B cell (primary cell): ENCODE measurements at regions of chr16 and their contacts with region 1.

Region 1: GRCh38 chr16:30922960-30923535 is 324 bp upstream of the FBXL19 start:
- DNase-seq: peak; percentile 98
- ATAC-seq: peak; percentile 69
- H3K4me3 ChIP-seq: peak overlapping the region; percentile 80 to 100 (median 98)
- H3K4me3 Mint-ChIP-seq: peak overlapping the region; percentile 100
- H3K27ac ChIP-seq: peak overlapping the region; percentile 97 to 99
- H3K27ac Mint-ChIP-seq: peak overlapping the region; percentile 100
- H3K4me1 ChIP-seq: peaks cover 0 to 21% of the 10 kb centered on the region in 2 donors
- H3K4me1 Mint-ChIP-seq: peaks cover 19% of the 10 kb centered on the region
- H3K27me3 ChIP-seq: no peaks in the 10 kb centered on the region
- H3K27me3 Mint-ChIP-seq: no peaks in the 10 kb centered on the region
- CTCF ChIP-seq: no peak

Region 2: GRCh38 chr16:28924732-28925385 is 1998.2 kb before region 1 on chr16 and contains the start of gene RABEP2:
- CTCF ChIA-PET with region 1: no interaction called
- POLR2A ChIA-PET with region 1: no interaction called
- intact Hi-C with region 1: loop called (anchors 2 kb)
- DNase-seq: peak; percentile 97
- ATAC-seq: peak; percentile 60
- H3K4me3 ChIP-seq: peak within 1 kb of the TSS; percentile 58 to 97 (median 92)
- H3K4me3 Mint-ChIP-seq: peak within 1 kb of the TSS; percentile 95
- H3K27ac ChIP-seq: peak within 1 kb of the TSS; percentile 87 to 91
- H3K27ac Mint-ChIP-seq: peak within 1 kb of the TSS; percentile 98
- H3K4me1 ChIP-seq: peaks cover 30 to 61% of the 10 kb centered on the region in 2 donors
- H3K4me1 Mint-ChIP-seq: peaks cover 51% of the 10 kb centered on the region
- H3K27me3 ChIP-seq: no peaks in the 10 kb centered on the region
- H3K27me3 Mint-ChIP-seq: no peaks in the 10 kb centered on the region
- CTCF ChIP-seq: no peak
- total RNA-seq, gene RABEP2: 132 and 136 TPM in 2 replicates

Region 3: DNA sequence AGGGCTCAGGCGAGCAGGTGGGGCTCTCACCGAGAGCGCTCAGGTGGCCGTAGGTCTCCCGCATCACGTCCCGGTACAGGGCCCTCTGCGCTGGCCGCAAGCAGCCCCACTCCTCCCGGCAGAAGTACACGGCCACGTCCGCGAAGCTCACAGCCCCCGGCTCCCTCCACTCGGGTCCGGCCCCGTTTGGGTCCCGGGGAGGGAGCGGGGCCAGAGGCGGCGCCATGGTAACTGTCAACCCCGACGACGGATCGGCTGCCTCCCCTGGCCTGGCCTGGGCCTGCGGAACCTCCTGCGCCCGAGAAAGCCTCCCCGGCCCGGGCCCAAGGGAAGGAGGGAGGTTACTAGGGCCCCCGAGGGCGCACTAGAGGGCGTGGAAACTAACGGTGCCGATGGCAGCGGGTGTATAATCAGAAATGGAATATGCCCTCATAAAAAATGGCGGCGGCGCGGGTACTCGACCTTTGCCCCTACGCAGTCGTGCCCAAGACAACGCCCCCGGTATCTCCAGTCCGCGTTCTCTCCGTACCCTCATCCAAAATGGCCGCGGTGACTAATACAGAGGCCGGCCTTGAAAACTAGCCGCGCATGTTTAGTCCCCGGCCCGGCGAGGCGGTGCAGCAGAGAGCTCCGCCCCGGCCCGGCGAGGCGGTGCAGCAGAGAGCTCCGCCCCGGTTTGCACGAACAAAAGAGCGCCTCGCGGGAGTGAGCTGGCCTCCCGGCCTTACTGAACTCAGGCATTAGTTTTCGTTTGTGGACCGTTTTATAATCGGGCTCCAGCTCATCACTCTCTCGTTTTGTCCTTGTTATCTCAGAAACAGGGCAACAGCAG is 364.9 kb before region 1 on chr16 and contains the start of gene ZNF764:
- CTCF ChIA-PET with region 1: no interaction called
- POLR2A ChIA-PET with region 1: no interaction called
- intact Hi-C with region 1: loop called (anchors 2 kb)
- DNase-seq: peak; percentile 97
- ATAC-seq: peak; percentile 92
- H3K4me3 ChIP-seq: peak within 1 kb of the TSS in 4 of 5 experiments; percentile 80 to 91 (median 88)
- H3K4me3 Mint-ChIP-seq: peak within 1 kb of the TSS; percentile 86
- H3K27ac ChIP-seq: peak within 1 kb of the TSS; percentile 95 to 97
- H3K27ac Mint-ChIP-seq: peak within 1 kb of the TSS; percentile 91
- H3K4me1 ChIP-seq: peaks cover 14 to 35% of the 10 kb centered on the region in 2 donors
- H3K4me1 Mint-ChIP-seq: peaks cover 42% of the 10 kb centered on the region
- H3K27me3 ChIP-seq: no peaks in the 10 kb centered on the region
- H3K27me3 Mint-ChIP-seq: no peaks in the 10 kb centered on the region
- CTCF ChIP-seq: no peak
- total RNA-seq, gene ZNF764: 19.7 and 20.9 TPM in 2 replicates

Region 4: DNA sequence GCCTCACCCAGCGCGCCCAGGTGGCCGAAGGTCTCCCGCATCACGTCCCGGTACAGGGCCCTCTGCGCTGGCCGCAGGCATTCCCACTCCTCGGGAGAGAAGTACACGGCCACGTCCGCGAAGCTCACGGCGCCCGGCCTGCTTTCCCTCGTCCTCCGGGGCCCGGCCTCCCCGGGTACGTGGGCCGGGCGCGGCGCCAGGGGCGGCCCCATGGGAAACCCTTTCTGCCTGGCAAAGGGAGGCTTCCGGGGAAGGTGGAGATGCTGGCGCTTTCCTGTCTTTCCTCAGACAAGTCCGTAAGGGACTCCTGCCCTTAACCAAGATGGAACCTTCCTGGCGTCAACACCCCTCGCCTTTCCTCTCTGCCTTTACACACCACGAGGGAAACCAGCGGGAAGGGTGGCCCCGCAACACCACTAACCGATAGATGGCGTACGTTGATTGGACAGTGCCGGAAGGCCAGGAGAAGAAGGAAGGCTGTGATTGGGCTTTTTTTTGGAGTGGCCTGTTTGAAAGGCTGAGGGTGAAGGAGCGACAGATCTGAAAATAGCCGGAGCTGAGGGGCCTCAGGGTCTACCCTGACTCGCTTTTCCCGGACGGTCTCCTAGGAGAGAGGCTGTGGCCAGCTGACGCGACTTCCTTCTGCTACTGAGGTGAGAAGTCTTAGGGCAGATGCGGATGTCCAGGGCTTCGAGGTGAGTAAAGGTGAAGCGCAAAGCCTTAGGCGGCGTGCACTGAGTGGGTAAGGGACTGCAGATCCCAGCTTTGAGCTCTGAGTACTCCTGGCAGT is 337.5 kb before region 1 on chr16 and contains the start of gene ZNF785:
- CTCF ChIA-PET with region 1: no interaction called
- POLR2A ChIA-PET with region 1: no interaction called
- intact Hi-C with region 1: no loop called
- DNase-seq: peak; percentile 95
- ATAC-seq: peak; percentile 99
- H3K4me3 ChIP-seq: peak within 1 kb of the TSS; percentile 56 to 89 (median 75)
- H3K4me3 Mint-ChIP-seq: peak within 1 kb of the TSS; percentile 85
- H3K27ac ChIP-seq: peak within 1 kb of the TSS; percentile 29 to 82
- H3K27ac Mint-ChIP-seq: peak within 1 kb of the TSS; percentile 71
- H3K4me1 ChIP-seq: peaks cover 8 to 21% of the 10 kb centered on the region in 2 donors
- H3K4me1 Mint-ChIP-seq: peaks cover 22% of the 10 kb centered on the region
- H3K27me3 ChIP-seq: no peaks in the 10 kb centered on the region
- H3K27me3 Mint-ChIP-seq: no peaks in the 10 kb centered on the region
- CTCF ChIP-seq: no peak
- total RNA-seq, gene ZNF785: 39.7 and 44.6 TPM in 2 replicates

Region 5: DNA sequence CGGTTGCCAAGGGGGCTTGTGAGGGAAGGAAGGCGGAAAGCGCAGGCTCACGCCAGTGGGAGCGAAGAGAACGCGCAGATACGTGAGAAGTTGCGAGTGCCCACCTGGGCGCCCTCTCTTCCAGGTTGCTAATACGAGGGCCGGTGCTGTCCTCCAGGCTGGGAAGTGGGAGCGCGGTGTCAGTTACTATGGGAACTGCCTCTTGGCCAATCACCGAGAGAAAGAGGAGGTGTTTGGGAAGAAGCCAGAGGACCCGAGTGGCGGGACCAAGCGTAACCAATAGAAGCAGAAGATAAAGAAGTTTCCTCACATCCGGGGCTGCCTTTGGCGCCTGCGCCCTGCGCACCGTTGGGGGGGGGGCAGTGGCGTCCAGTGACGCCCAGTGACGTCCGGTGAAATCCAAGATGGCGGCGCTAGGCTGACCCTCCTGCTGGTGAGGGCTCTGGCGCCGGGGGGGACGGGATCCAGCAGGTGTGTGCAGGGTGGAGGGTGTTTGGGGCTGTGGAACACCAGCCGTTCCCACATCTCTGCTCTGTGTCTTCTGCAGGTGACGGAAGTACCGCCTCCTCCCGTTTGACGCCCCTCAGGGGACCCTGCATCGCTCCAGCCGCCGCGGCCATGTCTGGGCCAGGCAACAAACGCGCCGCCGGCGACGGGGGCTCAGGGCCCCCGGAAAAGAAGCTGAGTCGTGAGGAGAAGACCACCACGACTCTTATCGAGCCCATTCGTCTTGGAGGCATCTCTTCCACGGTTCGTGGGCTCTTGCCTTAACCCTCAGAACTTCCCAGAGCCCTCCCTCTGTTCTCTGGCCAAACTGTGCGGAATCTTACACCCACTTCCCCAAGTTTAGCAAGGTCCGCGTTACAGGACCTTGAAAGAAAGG is 160.9 kb before region 1 on chr16 and contains the starts of genes CFAP119 and RNF40:
- CTCF ChIA-PET with region 1: no interaction called
- POLR2A ChIA-PET with region 1: no interaction called
- intact Hi-C with region 1: loop called (anchors 1 kb)
- DNase-seq: peak; percentile 95
- ATAC-seq: peak; percentile 92
- H3K4me3 ChIP-seq: peak within 1 kb of the TSS; percentile 82 to 93 (median 90)
- H3K4me3 Mint-ChIP-seq: peak within 1 kb of the TSS; percentile 98
- H3K27ac ChIP-seq: peak within 1 kb of the TSS; percentile 57 to 91
- H3K27ac Mint-ChIP-seq: peak within 1 kb of the TSS; percentile 95
- H3K4me1 ChIP-seq: peaks cover 24 to 37% of the 10 kb centered on the region in 2 donors
- H3K4me1 Mint-ChIP-seq: peaks cover 36% of the 10 kb centered on the region
- H3K27me3 ChIP-seq: no peaks in the 10 kb centered on the region
- H3K27me3 Mint-ChIP-seq: no peaks in the 10 kb centered on the region
- CTCF ChIP-seq: no peak
- total RNA-seq, gene CFAP119: 9.3 and 11.7 TPM in 2 replicates
- total RNA-seq, gene RNF40: 120 and 121 TPM in 2 replicates

Region 6: DNA sequence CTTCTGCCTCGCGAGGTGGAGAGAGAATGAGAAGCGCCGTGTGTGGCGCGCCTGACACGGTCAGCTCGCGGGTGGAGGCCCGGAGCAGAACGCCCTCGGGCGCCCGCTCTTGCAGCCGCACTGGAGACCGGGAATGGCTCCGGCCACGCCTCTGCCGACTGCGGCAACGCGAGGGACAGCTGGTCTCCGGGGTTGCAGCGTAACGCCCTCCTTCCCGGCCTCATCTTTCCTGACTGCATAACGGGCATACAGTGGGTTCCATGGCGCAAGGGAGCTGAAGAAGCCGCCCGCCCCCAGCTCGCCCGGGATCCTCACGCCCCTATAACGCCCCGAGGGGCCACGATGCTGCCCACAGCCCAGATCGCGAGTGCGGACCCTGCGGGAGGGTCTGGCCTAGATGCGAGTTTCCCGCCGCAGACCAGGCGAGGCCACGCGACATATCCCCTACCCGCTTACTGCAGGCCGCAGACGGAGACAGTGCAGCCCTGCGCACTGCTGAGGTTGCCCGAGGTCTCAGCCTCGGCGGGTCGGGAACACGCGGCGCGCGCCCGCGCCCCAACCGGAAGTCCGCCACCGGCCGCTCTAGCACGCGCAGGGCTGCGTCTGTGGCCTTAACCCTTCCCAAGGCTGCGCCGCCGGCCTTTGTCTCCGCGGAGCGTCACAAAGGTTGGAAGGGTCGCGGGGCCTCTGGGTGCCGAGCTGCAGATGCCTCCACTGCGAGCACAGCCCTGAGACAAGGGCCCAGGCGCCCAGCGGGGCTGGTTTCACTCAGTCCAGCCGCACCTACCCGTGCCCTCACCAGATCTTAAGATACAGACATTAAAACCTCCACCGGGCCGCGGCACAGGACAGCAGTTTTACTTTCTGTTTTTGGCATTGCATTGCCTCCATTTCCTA is 48.0 kb before region 1 on chr16:
- CTCF ChIA-PET with region 1: no interaction called
- POLR2A ChIA-PET with region 1: interaction called, 3 read pairs
- intact Hi-C with region 1: loop called (anchors 1 kb)
- DNase-seq: peak; percentile 93
- ATAC-seq: peak; percentile 88
- H3K4me3 ChIP-seq: peak overlapping the region; percentile 78 to 99 (median 81)
- H3K4me3 Mint-ChIP-seq: peak overlapping the region; percentile 97
- H3K27ac ChIP-seq: peak overlapping the region; percentile 82 to 88
- H3K27ac Mint-ChIP-seq: peak overlapping the region; percentile 97
- H3K4me1 ChIP-seq: peaks cover 16 to 21% of the 10 kb centered on the region in 2 donors
- H3K4me1 Mint-ChIP-seq: peaks cover 36% of the 10 kb centered on the region
- H3K27me3 ChIP-seq: no peaks in the 10 kb centered on the region
- H3K27me3 Mint-ChIP-seq: no peaks in the 10 kb centered on the region
- CTCF ChIP-seq: no peak

Region 7: GRCh38 chr16:30941600-30942425 is 18.8 kb after region 1 on chr16:
- CTCF ChIA-PET with region 1: interaction called, 23 read pairs
- POLR2A ChIA-PET with region 1: no interaction called
- intact Hi-C with region 1: no loop called
- DNase-seq: peak; percentile 82
- ATAC-seq: peak; percentile 100
- H3K4me3 ChIP-seq: peak overlapping the region in 2 of 5 experiments; percentile 16 to 23
- H3K4me3 Mint-ChIP-seq: no peak overlapping the region
- H3K27ac ChIP-seq: no peak overlapping the region
- H3K27ac Mint-ChIP-seq: peak overlapping the region; percentile 59
- H3K4me1 ChIP-seq: peaks cover 11 to 19% of the 10 kb centered on the region in 2 donors
- H3K4me1 Mint-ChIP-seq: peaks cover 17% of the 10 kb centered on the region
- H3K27me3 ChIP-seq: no peaks in the 10 kb centered on the region
- H3K27me3 Mint-ChIP-seq: no peaks in the 10 kb centered on the region
- CTCF ChIP-seq: peak; percentile 88

Region 8: GRCh38 chr16:31022544-31023251 is 99.7 kb after region 1 on chr16:
- CTCF ChIA-PET with region 1: no interaction called
- POLR2A ChIA-PET with region 1: interaction called, 18 read pairs
- intact Hi-C with region 1: no loop called
- DNase-seq: no peak
- ATAC-seq: no peak
- H3K4me3 ChIP-seq: no peak overlapping the region
- H3K4me3 Mint-ChIP-seq: no peak overlapping the region
- H3K27ac ChIP-seq: no peak overlapping the region
- H3K27ac Mint-ChIP-seq: no peak overlapping the region
- H3K4me1 ChIP-seq: no peaks in the 10 kb centered on the region
- H3K4me1 Mint-ChIP-seq: no peaks in the 10 kb centered on the region
- H3K27me3 ChIP-seq: no peaks in the 10 kb centered on the region
- H3K27me3 Mint-ChIP-seq: peaks cover 3% of the 10 kb centered on the region
- CTCF ChIP-seq: no peak

Region 9: GRCh38 chr16:31286421-31287032 is 363.5 kb after region 1 on chr16:
- CTCF ChIA-PET with region 1: no interaction called
- POLR2A ChIA-PET with region 1: no interaction called
- intact Hi-C with region 1: no loop called
- DNase-seq: no peak
- ATAC-seq: no peak
- H3K4me3 ChIP-seq: no peak overlapping the region
- H3K4me3 Mint-ChIP-seq: no peak overlapping the region
- H3K27ac ChIP-seq: no peak overlapping the region
- H3K27ac Mint-ChIP-seq: peak overlapping the region; percentile 17
- H3K4me1 ChIP-seq: no peaks in the 10 kb centered on the region
- H3K4me1 Mint-ChIP-seq: peaks cover 20% of the 10 kb centered on the region
- H3K27me3 ChIP-seq: no peaks in the 10 kb centered on the region
- H3K27me3 Mint-ChIP-seq: no peaks in the 10 kb centered on the region
- CTCF ChIP-seq: no peak